ENCODE measurements at regions of chr3 and their contacts with region 1.

Region 1: GRCh38 chr3:48465531-48466378 is 19.2 kb downstream of the ATRIP start:
- DNase-seq: peak; percentile 87 to 94
- H3K4me3 ChIP-seq: no peak overlapping the region; a peak in 1 of 8 replicates
- H3K27ac ChIP-seq: peak overlapping the region; percentile 88
- H3K4me1 ChIP-seq: peaks cover 0 to 25% (median 14%) of the 10 kb centered on the region in 4 experiments; a peak in 5 of 7 replicates
- H3K27me3 ChIP-seq: no peaks in the 10 kb centered on the region
- CTCF ChIP-seq: peak in 2 of 3 experiments; percentile 87 to 92; a peak in 3 of 4 replicates
- EP300 ChIP-seq: peak in 1 of 2 experiments; percentile 72; a peak in 1 of 3 replicates
- POLR2A ChIP-seq: no peak
- RAD21 ChIP-seq: peak; percentile 93

Region 2: GRCh38 chr3:48306860-48307530 is 158.8 kb before region 1 on chr3:
- CTCF ChIA-PET with region 1: no interaction called
- POLR2A ChIA-PET with region 1: no interaction called
- DNase-seq: no peak
- H3K4me3 ChIP-seq: no peak overlapping the region
- H3K27ac ChIP-seq: no peak overlapping the region
- H3K4me1 ChIP-seq: no peaks in the 10 kb centered on the region; a peak in 1 of 7 replicates
- H3K27me3 ChIP-seq: peaks cover 0 to 8% (median 3%) of the 10 kb centered on the region in 4 experiments; a peak in 3 of 7 replicates
- CTCF ChIP-seq: no peak
- EP300 ChIP-seq: no peak
- POLR2A ChIP-seq: no peak
- RAD21 ChIP-seq: no peak

Region 3: DNA sequence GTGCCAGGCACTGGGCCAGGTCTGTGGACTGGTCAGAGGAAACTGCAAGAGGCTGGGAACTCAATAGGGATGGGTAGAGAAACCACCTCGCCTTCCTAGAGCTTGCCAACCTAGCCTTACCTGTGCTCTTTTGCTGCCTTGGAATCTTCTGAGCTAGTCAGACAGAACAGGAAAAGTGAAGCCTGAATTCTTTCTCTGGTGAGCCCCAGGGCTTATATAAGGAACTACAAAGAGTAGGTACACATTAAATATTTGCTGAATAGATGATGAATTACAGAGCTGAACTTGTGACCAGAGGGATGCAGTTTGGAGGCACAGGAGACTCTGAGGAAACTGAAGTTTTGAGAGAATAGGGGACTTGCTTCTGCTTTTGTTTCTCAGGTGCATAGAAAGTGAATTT is 109.3 kb before region 1 on chr3:
- CTCF ChIA-PET with region 1: no interaction called
- POLR2A ChIA-PET with region 1: no interaction called
- DNase-seq: no peak
- H3K4me3 ChIP-seq: no peak overlapping the region
- H3K27ac ChIP-seq: no peak overlapping the region
- H3K4me1 ChIP-seq: no peaks in the 10 kb centered on the region
- H3K27me3 ChIP-seq: peaks cover 0 to 2% (median 0%) of the 10 kb centered on the region in 4 experiments; a peak in 1 of 7 replicates
- CTCF ChIP-seq: no peak
- EP300 ChIP-seq: no peak
- POLR2A ChIP-seq: no peak
- RAD21 ChIP-seq: no peak

Region 4: DNA sequence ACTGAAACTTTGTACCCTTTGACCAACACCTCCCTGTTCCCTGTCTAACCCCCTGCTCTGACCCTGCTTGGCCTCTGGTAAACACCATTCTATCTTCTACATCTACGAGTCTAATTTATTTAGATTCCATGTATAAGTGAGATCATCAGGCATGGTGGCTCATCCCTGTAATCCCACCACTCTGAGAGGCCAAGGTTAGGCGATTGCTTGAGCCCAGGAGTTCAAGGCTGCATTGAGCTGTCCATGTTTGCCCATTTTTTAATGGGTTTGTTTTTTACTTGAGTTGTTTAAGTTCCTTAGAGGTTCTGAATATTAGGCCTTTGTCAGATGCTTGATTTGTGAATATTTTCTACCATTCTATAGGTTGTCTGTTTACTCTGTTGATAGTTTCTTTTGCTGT is 76.8 kb before region 1 on chr3:
- CTCF ChIA-PET with region 1: no interaction called
- POLR2A ChIA-PET with region 1: no interaction called
- DNase-seq: no peak
- H3K4me3 ChIP-seq: no peak overlapping the region
- H3K27ac ChIP-seq: no peak overlapping the region
- H3K4me1 ChIP-seq: no peaks in the 10 kb centered on the region
- H3K27me3 ChIP-seq: no peaks in the 10 kb centered on the region
- CTCF ChIP-seq: no peak
- EP300 ChIP-seq: no peak
- POLR2A ChIP-seq: no peak
- RAD21 ChIP-seq: no peak

Region 5: DNA sequence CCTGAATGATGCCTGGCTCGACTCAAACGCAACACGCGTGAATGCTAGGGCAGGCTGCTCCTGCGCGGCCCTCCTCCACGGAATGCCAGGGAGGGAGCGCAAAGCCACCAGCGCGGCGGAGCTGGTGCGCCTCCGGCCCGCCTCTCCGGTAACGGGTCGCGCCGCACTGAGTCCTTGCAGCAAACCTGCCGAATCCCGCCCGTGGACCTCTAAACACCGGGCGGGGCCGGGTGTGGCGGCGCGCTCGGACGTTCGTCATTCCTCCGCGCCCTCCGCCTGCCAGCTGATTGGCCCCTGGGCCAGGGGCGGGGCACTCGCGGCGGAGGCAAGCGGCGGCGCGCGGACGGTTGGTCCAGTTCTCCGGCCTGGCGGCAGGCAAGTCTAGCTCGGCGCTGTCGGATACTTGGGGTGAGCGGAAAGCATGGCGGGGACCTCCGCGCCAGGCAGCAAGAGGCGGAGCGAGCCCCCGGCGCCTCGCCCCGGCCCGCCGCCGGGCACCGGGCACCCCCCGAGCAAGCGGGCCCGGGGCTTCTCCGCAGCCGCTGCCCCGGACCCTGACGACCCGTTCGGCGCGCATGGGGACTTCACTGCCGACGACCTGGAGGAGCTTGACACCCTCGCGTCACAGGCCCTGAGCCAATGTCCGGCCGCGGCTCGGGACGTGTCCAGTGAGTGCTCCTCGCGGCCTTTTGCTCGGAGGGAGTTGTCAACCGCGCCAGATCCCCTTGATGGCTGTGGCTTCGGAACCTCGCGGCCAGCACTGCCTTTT is 19.1 kb before region 1 on chr3 and contains the start of gene ATRIP:
- CTCF ChIA-PET with region 1: interaction called, 6 read pairs
- POLR2A ChIA-PET with region 1: interaction called, 34 read pairs
- DNase-seq: peak in 1 of 2 experiments; percentile 95
- H3K4me3 ChIP-seq: peak within 1 kb of the TSS; percentile 80 to 98 (median 96)
- H3K27ac ChIP-seq: peak within 1 kb of the TSS; percentile 66
- H3K4me1 ChIP-seq: peaks cover 3 to 15% (median 6%) of the 10 kb centered on the region in 4 experiments; a peak in 5 of 7 replicates
- H3K27me3 ChIP-seq: no peaks in the 10 kb centered on the region
- CTCF ChIP-seq: no peak
- EP300 ChIP-seq: peak in 1 of 2 experiments; percentile 35; a peak in 1 of 3 replicates
- POLR2A ChIP-seq: peak; percentile 81 to 97
- RAD21 ChIP-seq: no peak
- total RNA-seq, gene ATRIP: 16.7 and 20.2 TPM in 2 replicates

Region 6: GRCh38 chr3:48507351-48508061 is 41.8 kb after region 1 on chr3:
- CTCF ChIA-PET with region 1: interaction called, 251 read pairs
- POLR2A ChIA-PET with region 1: interaction called, 12 read pairs
- DNase-seq: peak; percentile 75 to 80
- H3K4me3 ChIP-seq: no peak overlapping the region
- H3K27ac ChIP-seq: 0 out of 2 replicates have a peak overlapping the region, but pooled peaks have one; percentile 2
- H3K4me1 ChIP-seq: peaks cover 4 to 14% (median 12%) of the 10 kb centered on the region in 4 experiments
- H3K27me3 ChIP-seq: peaks cover 0 to 3% (median 0%) of the 10 kb centered on the region in 4 experiments; a peak in 2 of 7 replicates
- CTCF ChIP-seq: peak in 2 of 3 experiments; percentile 90 to 95; a peak in 3 of 4 replicates
- EP300 ChIP-seq: no peak; a peak in 1 of 3 replicates
- POLR2A ChIP-seq: no peak
- RAD21 ChIP-seq: peak; percentile 93 to 95

Region 7: GRCh38 chr3:48514436-48515227 is 48.9 kb after region 1 on chr3:
- CTCF ChIA-PET with region 1: interaction called, 251 read pairs
- POLR2A ChIA-PET with region 1: interaction called, 3 read pairs
- DNase-seq: no peak
- H3K4me3 ChIP-seq: no peak overlapping the region
- H3K27ac ChIP-seq: no peak overlapping the region
- H3K4me1 ChIP-seq: no peaks in the 10 kb centered on the region
- H3K27me3 ChIP-seq: no peaks in the 10 kb centered on the region
- CTCF ChIP-seq: no peak
- EP300 ChIP-seq: no peak
- POLR2A ChIP-seq: no peak
- RAD21 ChIP-seq: no peak

Region 8: DNA sequence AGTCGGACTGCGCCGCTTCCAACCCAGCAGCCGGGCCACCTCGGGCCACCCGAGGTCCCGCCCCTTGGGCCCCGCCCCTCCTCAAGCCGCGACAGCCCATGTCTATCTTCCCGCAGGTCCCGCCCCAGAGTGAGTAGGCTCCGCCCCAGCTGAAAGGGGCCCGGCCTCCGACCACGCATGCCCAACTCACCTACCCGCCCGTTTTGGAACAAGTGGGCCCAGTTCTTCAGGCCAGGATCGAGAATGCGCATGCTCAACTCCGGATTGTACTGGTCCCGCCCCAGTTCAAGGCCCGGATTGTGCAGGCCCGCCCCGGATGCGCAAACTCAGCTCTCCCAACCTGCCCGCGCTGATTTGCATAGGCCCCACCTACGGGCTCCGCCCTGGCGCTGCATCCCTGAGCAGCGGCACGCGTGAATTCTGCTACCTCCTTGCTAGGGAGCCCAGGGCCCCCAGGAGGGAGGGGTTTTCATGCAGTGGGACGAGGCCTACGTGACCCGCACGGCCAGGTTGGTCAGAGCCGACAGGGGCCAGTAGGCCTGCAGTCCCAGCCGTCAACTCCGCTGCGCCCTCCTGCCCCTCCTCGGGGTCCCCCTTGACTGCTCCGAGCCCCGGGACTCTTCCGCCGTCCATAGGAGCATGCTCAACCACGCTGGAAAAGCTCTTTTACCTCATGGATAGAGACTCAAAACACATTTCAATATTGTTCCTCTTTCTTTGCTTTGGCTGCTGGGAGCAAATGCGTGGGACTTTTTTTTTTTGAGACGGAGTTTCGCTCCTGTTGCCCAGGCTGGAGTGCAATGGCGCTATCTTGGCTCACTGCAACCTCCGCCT is 91.3 kb after region 1 on chr3 and contains the start of gene PFKFB4:
- CTCF ChIA-PET with region 1: interaction called, 67 read pairs
- POLR2A ChIA-PET with region 1: interaction called, 14 read pairs
- DNase-seq: peak; percentile 99 to 100
- H3K4me3 ChIP-seq: peak within 1 kb of the TSS; percentile 67 to 90 (median 73)
- H3K27ac ChIP-seq: peak within 1 kb of the TSS; percentile 67
- H3K4me1 ChIP-seq: peaks cover 4 to 33% (median 22%) of the 10 kb centered on the region in 4 experiments
- H3K27me3 ChIP-seq: no peaks in the 10 kb centered on the region
- CTCF ChIP-seq: peak in 1 of 3 experiments; percentile 36; a peak in 1 of 4 replicates
- EP300 ChIP-seq: no peak
- POLR2A ChIP-seq: peak in 1 of 2 experiments; percentile 82; a peak in 2 of 3 replicates
- RAD21 ChIP-seq: no peak
- total RNA-seq, gene PFKFB4: 10.7 and 11.3 TPM in 2 replicates

Region 9: DNA sequence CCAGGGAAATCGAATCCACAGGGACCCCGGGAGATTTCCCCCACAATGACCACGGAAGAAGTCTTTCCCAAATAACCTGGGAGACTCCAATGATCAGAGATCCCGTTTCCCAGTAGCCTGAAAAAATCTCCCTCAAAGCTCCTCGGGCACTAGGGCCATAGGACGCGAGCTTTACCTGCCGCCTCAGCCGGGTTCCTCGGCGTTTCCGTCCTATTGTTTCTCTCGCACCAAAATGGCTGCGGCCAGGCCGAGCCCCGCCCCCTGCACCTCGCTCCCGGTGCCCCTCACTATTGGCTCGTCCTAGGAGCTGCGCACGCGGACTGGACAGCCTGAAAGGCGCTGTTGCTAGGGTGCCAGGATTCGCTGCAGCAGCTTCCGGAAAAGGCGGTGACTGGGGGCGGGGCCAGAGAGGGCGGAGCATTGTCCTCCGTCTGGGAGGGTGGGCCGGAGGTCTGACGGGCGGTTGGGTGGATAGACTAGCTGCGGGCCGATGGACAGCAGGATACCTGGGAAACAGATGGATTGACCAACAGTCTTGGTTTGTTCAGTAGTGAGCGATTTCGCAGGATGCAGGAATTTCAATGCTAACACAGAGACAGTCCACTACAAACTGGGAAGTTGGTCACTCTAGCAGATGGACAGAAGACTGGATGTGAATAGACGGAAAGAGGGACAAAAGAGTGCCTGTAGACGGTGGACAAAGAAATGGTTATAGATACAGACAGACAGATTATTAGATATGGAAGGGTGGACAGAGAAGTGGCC is 251.4 kb after region 1 on chr3 and contains the start of gene IP6K2:
- CTCF ChIA-PET with region 1: no interaction called
- POLR2A ChIA-PET with region 1: no interaction called
- DNase-seq: peak; percentile 97 to 100
- H3K4me3 ChIP-seq: peak within 1 kb of the TSS; percentile 94 to 100 (median 97)
- H3K27ac ChIP-seq: peak within 1 kb of the TSS; percentile 98
- H3K4me1 ChIP-seq: peaks cover 0 to 11% (median 3%) of the 10 kb centered on the region in 4 experiments; a peak in 5 of 7 replicates
- H3K27me3 ChIP-seq: no peaks in the 10 kb centered on the region
- CTCF ChIP-seq: no peak
- EP300 ChIP-seq: no peak
- POLR2A ChIP-seq: peak; percentile 89
- RAD21 ChIP-seq: no peak
- total RNA-seq, gene IP6K2: 89.4 and 95.8 TPM in 2 replicates

Measured in H1 (cell line).